ENCODE measurements at regions of chr12 and their contacts with region 1.

Region 1: GRCh38 chr12:94733727-94734126 is 83.4 kb upstream of the TMCC3 start:
- DNase-seq: no peak
- H3K4me3 ChIP-seq: no peak overlapping the region
- H3K27ac ChIP-seq: no peak overlapping the region
- H3K27me3 ChIP-seq: no peaks in the 10 kb centered on the region
- CTCF ChIP-seq: no peak

Region 2: DNA sequence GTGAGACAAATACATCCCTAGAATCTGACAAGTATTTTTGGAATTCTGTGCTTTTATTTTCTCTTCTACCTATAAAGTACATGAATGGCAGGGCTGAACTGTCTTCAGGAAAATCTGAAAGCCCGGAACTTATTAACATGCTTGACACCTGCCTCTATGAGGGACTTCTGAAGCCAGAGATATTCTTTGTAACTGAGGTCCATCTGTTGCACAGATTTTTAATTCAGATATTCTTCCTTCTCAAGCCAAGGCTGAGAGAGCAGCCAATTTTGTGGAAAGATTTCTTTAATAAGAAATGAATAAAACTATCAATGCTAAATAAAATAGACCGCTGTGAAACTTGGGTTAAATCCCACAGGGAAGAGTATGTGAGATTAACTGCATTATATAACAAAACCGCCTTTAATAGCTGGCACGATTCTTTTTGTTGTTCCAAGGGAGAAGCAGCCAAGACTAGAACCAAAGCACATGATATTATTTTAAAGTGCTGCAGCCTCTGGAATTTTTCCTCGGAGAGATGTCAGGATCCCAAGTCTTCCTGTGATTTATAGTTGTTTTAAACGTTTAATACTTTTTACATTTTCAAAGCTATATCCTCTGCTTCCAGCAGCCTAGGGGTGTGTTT is 907.7 kb before region 1 on chr12:
- intact Hi-C with region 1: no loop called
- DNase-seq: no peak
- H3K4me3 ChIP-seq: peak overlapping the region in 1 of 59 donors; percentile 1
- H3K27ac ChIP-seq: peak overlapping the region in 10 of 59 donors; percentile 0 to 57 (median 22)
- H3K27me3 ChIP-seq: no peaks in the 10 kb centered on the region
- CTCF ChIP-seq: no peak

Region 3: DNA sequence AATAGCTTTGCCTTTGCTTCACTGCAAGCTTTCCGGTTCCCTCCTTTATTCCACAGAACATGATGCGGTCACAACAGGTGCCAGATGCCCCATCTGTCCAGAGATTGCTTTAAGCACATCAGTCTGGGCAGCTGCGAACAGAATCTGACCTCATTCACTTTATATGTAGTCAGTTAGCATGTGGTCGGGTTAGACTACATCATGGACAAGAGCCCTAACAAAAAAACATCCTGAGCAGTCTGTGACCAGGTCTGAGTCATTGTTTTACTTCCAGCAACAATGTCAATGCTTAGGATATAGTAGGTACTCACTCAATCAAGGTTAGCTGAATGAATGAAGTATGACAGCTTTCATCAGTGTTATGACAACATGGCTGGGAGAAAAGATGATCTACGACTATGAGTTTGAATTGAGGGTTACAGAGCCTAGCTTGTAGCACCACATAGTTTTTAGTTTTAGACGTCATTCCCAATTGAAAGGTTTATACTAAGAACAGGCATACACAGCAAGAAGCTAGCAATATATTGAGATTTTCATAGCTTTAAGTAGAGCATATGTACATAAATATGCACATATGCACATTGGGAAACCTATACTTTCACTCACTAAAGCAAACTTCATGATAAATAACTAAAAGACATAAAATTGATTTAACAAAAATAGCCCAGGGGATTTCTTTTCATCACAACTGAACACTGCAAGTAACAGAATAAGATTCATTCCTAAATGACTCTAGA is 19.2 kb before region 1 on chr12:
- intact Hi-C with region 1: loop called in 1 of 2 experiments (anchors 1 kb)
- DNase-seq: no peak
- H3K4me3 ChIP-seq: no peak overlapping the region
- H3K27ac ChIP-seq: no peak overlapping the region
- H3K27me3 ChIP-seq: no peaks in the 10 kb centered on the region
- CTCF ChIP-seq: no peak

Measured in dorsolateral prefrontal cortex (tissue), 120 donors.